GM12878 (cell line): ENCODE measurements at regions of chr20 and their contacts with region 1.

Region 1: GRCh38 chr20:12345978-12346377 is 428.3 kb downstream of the BTBD3 start:
- DNase-seq: no peak
- ATAC-seq: no peak
- H3K4me3 ChIP-seq: no peak overlapping the region
- H3K27ac ChIP-seq: no peak overlapping the region
- H3K4me1 ChIP-seq: no peaks in the 10 kb centered on the region
- H3K27me3 ChIP-seq: no peaks in the 10 kb centered on the region
- CTCF ChIP-seq: no peak
- EP300 ChIP-seq: no peak
- POLR2A ChIP-seq: no peak
- RAD21 ChIP-seq: no peak

Region 2: GRCh38 chr20:12287575-12287974 is 58.4 kb before region 1 on chr20:
- CTCF ChIA-PET with region 1: no interaction called
- POLR2A ChIA-PET with region 1: no interaction called
- RAD21 ChIA-PET with region 1: no interaction called
- SMC1A ChIA-PET with region 1: no interaction called
- in situ Hi-C with region 1: no loop called
- intact Hi-C with region 1: loop called (anchors 10 kb)
- DNase-seq: no peak
- ATAC-seq: no peak
- H3K4me3 ChIP-seq: no peak overlapping the region
- H3K27ac ChIP-seq: no peak overlapping the region
- H3K4me1 ChIP-seq: no peaks in the 10 kb centered on the region
- H3K27me3 ChIP-seq: no peaks in the 10 kb centered on the region
- CTCF ChIP-seq: no peak
- EP300 ChIP-seq: no peak
- POLR2A ChIP-seq: no peak
- RAD21 ChIP-seq: no peak

Region 3: GRCh38 chr20:12331236-12331635 is 14.7 kb before region 1 on chr20:
- CTCF ChIA-PET with region 1: no interaction called
- POLR2A ChIA-PET with region 1: no interaction called
- RAD21 ChIA-PET with region 1: no interaction called
- SMC1A ChIA-PET with region 1: no interaction called
- in situ Hi-C with region 1: no loop called
- intact Hi-C with region 1: no loop called
- DNase-seq: no peak
- ATAC-seq: no peak
- H3K4me3 ChIP-seq: no peak overlapping the region
- H3K27ac ChIP-seq: no peak overlapping the region
- H3K4me1 ChIP-seq: no peaks in the 10 kb centered on the region
- H3K27me3 ChIP-seq: no peaks in the 10 kb centered on the region
- CTCF ChIP-seq: no peak
- EP300 ChIP-seq: no peak
- POLR2A ChIP-seq: no peak
- RAD21 ChIP-seq: no peak